Head of caudate nucleus (tissue), 42 donors: ENCODE measurements at regions of chr6 and their contacts with region 1.

Region 1: DNA sequence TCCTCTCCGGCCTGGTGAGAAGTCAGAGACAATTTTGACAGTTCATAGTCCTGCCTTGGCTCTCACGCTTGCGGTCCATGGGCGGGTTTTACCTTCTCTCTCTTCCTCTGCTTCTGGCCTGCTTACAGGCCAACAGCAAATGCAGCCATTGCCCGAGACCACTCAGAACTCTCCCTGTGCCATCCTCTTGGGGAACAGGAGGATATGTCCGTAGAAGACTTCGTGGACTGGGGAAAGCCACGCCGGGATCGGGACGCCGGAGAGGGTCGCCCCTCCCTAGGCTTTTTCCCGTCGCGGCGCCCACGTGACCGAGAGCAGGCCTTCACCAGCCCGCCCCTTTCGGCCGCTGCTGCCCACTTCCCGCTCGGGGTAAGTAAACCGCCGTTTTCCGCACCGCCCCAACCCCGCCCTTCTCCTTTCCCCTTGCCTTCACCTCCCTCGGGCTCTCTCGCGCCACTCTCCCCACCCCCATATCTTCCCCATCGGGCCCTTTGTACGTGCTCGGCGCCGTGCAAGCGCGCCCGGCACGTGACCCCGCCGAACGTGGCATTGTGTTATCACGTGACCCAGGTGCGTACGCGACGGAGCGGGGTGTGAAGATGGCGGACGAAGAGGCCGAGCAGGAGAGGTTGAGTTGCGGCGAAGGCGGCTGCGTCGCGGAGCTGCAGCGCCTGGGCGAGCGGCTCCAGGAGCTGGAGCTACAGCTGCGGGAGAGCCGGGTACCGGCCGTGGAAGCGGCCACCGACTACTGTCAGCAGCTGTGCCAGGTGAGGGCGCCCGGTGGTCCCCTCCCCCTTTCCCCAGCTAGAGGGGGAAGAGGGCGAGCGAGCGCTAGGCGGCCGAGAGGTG is at the start of gene ZNF292:
- DNase-seq: peak; percentile 90 to 98 (median 95)

Region 2: DNA sequence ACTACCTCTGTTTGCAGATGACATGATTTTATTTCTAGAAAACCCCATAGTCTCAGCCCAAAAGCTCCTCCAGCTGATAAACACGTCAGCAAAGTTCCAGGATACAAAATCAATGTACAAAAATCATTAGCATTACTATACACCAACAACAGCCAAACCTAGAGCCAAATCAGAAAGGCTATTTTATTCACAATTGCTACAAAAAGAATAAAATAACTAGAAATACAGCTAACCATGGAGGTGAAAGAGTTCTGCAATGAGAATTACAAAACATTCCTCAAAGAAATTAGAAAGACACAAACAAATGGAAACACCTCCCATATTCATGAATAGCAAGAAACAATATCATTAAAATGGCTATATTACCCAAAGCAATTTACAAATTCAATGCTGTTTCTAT is 283.5 kb before region 1 on chr6:
- intact Hi-C with region 1: no loop called
- DNase-seq: no peak

Region 3: GRCh38 chr6:87237804-87238203 is 82.6 kb after region 1 on chr6:
- intact Hi-C with region 1: loop called (anchors 10 kb)
- DNase-seq: no peak

Region 4: GRCh38 chr6:87333591-87334181 is 178.5 kb after region 1 on chr6:
- intact Hi-C with region 1: no loop called
- DNase-seq: no peak

Region 5: DNA sequence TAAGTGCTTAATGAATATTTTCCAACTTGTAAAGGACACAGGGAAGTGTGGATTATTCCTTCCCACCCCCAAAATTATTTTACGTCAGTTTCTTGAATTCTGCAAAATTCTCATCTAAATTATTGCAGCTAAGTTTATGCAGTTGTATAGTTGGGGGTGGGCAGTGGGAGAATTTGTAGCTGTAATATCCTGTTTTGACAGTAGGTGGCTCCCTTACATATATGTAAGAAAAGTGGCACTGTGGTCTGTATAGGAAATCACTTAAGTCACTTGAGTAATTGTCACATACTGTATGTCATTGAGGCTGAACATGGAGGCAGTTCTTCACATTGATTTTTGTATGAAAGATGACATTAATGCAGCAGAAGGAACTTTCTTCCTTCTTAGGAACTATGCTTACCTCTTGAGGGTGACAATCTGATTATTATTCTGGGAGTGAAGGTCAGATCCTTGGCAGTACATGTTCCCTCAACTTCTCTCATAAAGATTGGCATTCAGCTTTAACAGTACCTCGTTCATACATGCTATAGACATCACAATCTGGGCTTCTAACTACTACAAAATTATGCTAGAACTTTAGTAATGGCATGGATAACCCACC is 237.9 kb after region 1 on chr6:
- intact Hi-C with region 1: loop called (anchors 10 kb)
- DNase-seq: peak in 18 of 42 donors; percentile 14 to 78 (median 36)

Region 6: GRCh38 chr6:89080542-89081422 is 1925.6 kb after region 1 on chr6 and contains the start of gene PNRC1:
- intact Hi-C with region 1: loop called (anchors 10 kb)
- DNase-seq: peak; percentile 100